ENCODE measurements at regions of chr16 and their contacts with region 1.

Region 1: GRCh38 chr16:24279982-24280381 is 23.8 kb downstream of the CACNG3 start:
- DNase-seq: no peak
- H3K4me3 ChIP-seq: no peak overlapping the region
- H3K27ac ChIP-seq: no peak overlapping the region
- H3K4me1 ChIP-seq: no peaks in the 10 kb centered on the region
- H3K27me3 ChIP-seq: no peaks in the 10 kb centered on the region
- CTCF ChIP-seq: no peak
- EP300 ChIP-seq: no peak
- POLR2A ChIP-seq: no peak

Region 2: DNA sequence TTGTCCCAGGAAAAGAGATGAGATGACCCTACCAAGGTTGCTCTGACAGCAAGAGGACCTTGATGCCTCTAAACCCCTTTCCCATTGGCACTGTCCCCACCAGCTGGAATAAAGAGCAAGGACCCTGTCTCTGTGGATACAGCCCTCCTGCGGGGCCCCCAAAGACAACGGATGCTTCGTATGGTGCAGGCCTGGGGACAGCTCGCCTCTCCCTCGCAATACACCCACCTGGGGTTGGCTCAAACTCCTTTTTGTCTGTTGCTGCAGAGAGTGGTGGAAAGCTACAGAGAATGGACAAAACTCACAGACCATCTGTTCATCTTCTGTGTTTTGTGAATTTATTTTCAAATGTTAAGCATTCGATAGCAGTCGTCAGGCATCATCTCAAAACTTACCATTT is 51.5 kb before region 1 on chr16:
- in situ Hi-C with region 1: no loop called
- intact Hi-C with region 1: loop called (anchors 1 kb)
- DNase-seq: no peak
- H3K4me3 ChIP-seq: no peak overlapping the region
- H3K27ac ChIP-seq: no peak overlapping the region
- H3K4me1 ChIP-seq: no peaks in the 10 kb centered on the region
- H3K27me3 ChIP-seq: no peaks in the 10 kb centered on the region
- CTCF ChIP-seq: no peak
- EP300 ChIP-seq: no peak
- POLR2A ChIP-seq: no peak